Colonic mucosa (tissue), 4 donors: ENCODE measurements at regions of chr19 and their contacts with region 1.

Region 1: DNA sequence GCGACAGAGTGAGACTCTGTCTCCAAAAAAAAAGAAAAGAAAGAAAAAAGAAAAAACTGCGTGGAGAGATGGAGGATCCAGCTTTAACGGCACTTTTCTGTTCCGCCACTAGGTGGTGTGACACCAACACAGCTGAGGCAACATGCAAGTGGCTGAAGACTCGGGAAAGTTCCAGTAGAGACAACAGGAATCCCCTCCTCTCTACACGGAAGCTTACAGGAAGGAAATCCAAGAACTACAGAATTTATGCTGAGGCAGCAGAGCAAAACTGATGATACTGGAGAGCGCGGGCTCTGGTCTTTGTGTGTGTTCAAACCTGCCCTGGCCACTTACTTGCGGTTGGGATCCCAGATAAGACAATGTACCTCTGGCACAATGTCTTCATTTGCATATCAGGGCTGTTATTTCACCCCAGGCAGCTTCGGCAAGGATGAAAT is 9.9 kb downstream of the RANBP3 start:
- DNase-seq: peak; percentile 90
- H3K4me3 ChIP-seq: no peak overlapping the region
- H3K27ac ChIP-seq: peak overlapping the region; percentile 56
- H3K4me1 ChIP-seq: peaks cover 8% of the 10 kb centered on the region
- H3K27me3 ChIP-seq: no peaks in the 10 kb centered on the region
- CTCF ChIP-seq: peak; percentile 81

Region 2: GRCh38 chr19:5775668-5776309 is 192.2 kb before region 1 on chr19:
- intact Hi-C with region 1: no loop called
- DNase-seq: no peak
- H3K4me3 ChIP-seq: no peak overlapping the region
- H3K27ac ChIP-seq: no peak overlapping the region
- H3K4me1 ChIP-seq: no peaks in the 10 kb centered on the region
- H3K27me3 ChIP-seq: no peaks in the 10 kb centered on the region
- CTCF ChIP-seq: no peak

Region 3: GRCh38 chr19:5904352-5905113 is 63.5 kb before region 1 on chr19 and contains the start of gene VMAC:
- intact Hi-C with region 1: loop called (anchors 10 kb)
- DNase-seq: peak; percentile 100
- H3K4me3 ChIP-seq: peak within 1 kb of the TSS; percentile 93
- H3K27ac ChIP-seq: peak within 1 kb of the TSS; percentile 81
- H3K4me1 ChIP-seq: peaks cover 10% of the 10 kb centered on the region
- H3K27me3 ChIP-seq: no peaks in the 10 kb centered on the region
- CTCF ChIP-seq: no peak
- total RNA-seq, gene VMAC: 4.0 to 4.7 TPM

Region 4: GRCh38 chr19:6021878-6022569 is 54.0 kb after region 1 on chr19:
- intact Hi-C with region 1: no loop called
- DNase-seq: peak; percentile 80
- H3K4me3 ChIP-seq: no peak overlapping the region
- H3K27ac ChIP-seq: no peak overlapping the region
- H3K4me1 ChIP-seq: no peaks in the 10 kb centered on the region
- H3K27me3 ChIP-seq: no peaks in the 10 kb centered on the region
- CTCF ChIP-seq: peak; percentile 71